Activated naive CD4-positive, alpha-beta T cell treated with anti-CD3 and anti-CD28 coated beads, Interleukin-2, amount 10 ng/mL, durations not matched to agents 7 days and 5 days (primary cell): ENCODE measurements at regions of chr2 and their contacts with region 1.

Region 1: DNA sequence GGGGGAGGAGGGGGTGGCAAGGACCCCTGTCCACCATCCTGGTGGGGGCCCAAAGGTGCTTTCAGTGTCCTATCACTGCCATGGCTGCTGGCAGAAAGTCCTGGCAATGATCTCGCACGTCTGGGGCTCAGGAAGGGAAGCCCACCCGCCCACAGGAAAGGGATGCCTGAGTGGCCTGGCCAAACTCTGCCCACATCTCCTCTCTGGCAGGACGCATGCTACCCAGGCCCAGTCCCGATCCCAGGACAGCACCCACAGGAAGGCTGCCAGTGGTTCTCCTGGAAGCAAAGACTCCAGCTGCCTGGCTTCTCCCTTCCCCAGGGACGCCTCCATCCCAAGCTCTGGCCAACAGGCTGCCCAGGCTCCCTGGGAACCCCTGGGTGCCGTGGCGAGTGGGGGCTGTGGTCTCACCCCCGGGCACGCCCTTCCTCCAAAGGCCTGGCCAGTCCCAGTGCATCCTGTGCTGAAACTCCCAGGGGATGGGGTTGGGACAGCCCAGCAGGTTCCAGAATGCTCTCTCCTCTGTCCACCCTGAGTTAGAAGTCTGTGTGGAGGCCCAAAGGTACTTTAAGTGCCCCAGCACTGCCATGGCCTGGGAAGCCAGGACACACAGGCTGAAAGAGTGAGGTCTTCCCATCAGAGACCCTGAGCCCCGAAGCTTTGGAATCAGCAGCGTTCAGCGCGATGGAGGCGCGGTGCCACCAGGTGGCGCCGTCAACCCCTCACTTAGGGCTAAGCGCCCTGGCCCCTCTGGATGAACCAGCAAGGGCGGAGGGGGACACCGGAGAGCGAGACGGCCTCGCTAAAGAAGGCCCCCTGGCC is 29.8 kb upstream of the TAF1B start:
- DNase-seq: peak; percentile 78
- H3K4me3 Mint-ChIP-seq: no peak overlapping the region
- H3K27ac Mint-ChIP-seq: no peak overlapping the region
- H3K4me1 Mint-ChIP-seq: peaks cover 29% of the 10 kb centered on the region
- H3K27me3 Mint-ChIP-seq: peaks cover 65% of the 10 kb centered on the region

Region 2: GRCh38 chr2:9739531-9739964 is 74.0 kb before region 1 on chr2:
- CTCF ChIA-PET with region 1: no interaction called
- DNase-seq: peak; percentile 82
- H3K4me3 Mint-ChIP-seq: peak overlapping the region; percentile 63
- H3K27ac Mint-ChIP-seq: peak overlapping the region; percentile 94
- H3K4me1 Mint-ChIP-seq: peaks cover 62% of the 10 kb centered on the region
- H3K27me3 Mint-ChIP-seq: peaks cover 34% of the 10 kb centered on the region

Region 3: DNA sequence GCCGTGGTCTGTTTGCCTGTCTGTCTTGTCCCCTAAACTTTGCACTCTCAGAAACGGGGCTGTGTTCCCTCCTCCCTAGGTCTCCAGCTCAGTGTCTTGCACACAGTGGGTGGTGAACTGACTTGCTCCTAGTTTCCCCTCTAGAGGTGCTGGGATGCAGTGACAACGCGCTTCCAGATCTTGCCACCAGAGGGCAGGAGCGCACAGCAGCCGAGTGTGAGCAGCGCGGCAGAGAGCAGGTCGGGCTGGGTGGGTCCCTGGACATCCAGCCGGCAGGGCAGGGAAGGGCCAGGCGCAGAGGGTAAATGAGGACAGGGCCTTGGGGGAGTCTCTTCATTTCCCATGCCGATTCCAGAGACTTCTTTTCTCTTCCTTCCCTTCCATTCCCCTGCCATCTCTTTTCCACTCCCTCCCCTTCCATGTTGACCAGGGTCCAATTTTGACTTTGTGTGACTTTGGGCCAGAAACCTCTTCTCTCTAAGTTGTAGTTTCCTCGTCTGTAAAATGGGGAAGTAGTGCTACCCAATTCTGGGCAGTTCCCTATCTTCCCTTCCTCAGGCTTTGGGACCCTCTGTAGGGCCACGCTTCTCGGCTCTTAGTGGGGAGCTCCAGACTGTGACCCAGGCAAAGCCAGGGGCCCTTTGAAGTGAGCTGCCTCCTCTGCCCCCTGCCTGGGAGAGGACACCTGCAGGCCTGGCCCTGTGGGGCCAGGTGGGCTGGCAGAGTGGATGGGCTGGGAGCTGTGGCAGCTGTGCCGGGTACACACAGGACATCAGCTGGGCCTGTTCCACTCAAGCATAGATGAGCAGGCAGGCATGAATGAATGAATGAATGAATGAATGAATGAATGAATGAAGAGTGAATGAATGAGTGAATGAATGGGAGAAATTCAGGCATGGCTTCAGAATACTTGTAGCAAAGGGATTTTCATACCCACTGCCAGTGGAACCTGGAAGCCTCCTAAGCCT is 13.6 kb before region 1 on chr2:
- CTCF ChIA-PET with region 1: interaction called, 63 read pairs
- DNase-seq: peak; percentile 92
- H3K4me3 Mint-ChIP-seq: peak overlapping the region; percentile 57
- H3K27ac Mint-ChIP-seq: peak overlapping the region; percentile 88
- H3K4me1 Mint-ChIP-seq: peaks cover 42% of the 10 kb centered on the region
- H3K27me3 Mint-ChIP-seq: peaks cover 49% of the 10 kb centered on the region

Region 4: DNA sequence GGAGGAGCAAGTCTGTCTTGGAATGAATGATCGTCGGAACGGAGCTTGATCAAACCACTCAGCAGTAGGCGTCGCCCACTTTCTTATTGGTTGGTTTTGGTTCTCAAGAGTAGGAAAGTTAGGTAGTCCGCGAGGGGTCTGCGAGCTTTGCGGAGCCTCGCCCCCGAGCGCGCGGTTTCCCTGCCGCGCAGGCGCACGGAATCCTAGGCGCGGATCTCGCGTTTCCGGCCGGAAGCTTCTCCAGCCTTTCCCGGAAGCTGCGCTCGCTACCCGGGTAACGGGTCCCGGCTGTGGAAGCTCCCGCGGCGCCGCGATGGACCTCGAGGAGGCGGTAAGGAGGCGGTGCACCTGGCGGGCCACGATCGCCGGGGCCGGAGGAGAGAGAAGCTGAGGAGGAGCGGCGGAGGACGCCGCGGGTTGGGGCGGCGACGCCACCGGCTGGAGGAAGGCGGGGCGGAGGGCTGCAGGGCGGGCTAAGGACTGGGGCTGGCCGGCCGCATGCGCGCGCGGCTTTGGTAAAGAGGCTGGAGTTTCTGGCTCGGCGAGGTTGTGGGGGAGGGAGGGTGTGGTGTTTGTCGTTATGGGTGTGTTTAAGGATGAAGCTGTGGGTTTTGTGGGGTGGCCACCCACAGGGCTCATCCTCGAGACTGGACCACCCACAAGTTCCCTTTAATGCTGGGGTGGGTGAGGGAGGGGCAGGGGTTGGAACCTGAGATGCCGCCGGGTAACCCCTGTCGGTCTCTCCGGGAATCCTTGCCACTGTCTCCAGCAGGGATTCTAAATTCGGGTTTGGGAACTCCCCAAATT is 29.9 kb after region 1 on chr2 and contains the start of gene TAF1B:
- CTCF ChIA-PET with region 1: interaction called, 29 read pairs
- DNase-seq: peak; percentile 91
- H3K4me3 Mint-ChIP-seq: peak within 1 kb of the TSS; percentile 85
- H3K27ac Mint-ChIP-seq: peak within 1 kb of the TSS; percentile 90
- H3K4me1 Mint-ChIP-seq: peaks cover 51% of the 10 kb centered on the region
- H3K27me3 Mint-ChIP-seq: peaks cover 17% of the 10 kb centered on the region

Region 5: GRCh38 chr2:10043906-10044601 is 230.5 kb after region 1 on chr2:
- CTCF ChIA-PET with region 1: interaction called, 110 read pairs
- DNase-seq: peak; percentile 92
- H3K4me3 Mint-ChIP-seq: peak overlapping the region; percentile 62
- H3K27ac Mint-ChIP-seq: peak overlapping the region; percentile 89
- H3K4me1 Mint-ChIP-seq: peaks cover 34% of the 10 kb centered on the region
- H3K27me3 Mint-ChIP-seq: peaks cover 64% of the 10 kb centered on the region